Activated B cell treated with CpG ODN at 0.5 μM for 24 hours (primary cell): ENCODE measurements at regions of chr9 and their contacts with region 1.

Region 1: DNA sequence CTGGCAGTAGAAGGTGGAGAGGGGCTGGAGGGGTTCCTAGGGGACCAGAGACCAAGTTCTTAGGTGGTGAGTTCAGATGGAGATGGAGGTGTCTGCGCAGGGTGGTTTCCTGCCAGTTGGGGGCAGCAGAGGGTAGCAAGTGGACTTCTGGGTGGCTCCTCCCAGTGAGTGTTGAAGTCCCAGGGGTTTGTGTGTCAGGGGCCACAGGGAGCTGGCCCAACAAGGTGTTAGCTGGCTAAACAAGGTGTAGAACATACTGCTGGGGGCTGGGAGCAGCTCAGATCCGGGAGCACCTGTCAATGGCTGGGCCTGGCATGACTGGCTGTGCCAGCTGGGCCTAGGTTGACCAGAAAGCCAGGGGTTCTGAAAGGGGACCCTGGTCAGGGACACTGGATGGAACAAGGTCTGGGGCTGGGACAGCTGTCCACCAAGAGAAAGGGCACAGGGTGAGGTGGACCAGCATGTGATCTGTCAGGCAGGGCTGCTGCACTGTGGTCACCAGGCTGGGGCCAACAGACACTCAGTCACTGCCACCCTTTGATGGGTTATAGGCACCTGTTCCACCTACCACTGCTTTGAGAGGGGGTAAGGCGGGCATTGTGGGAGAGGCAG is 35.6 kb downstream of the DAB2IP start:
- DNase-seq: peak; percentile 57
- ATAC-seq: peak; percentile 90
- H3K4me3 Mint-ChIP-seq: no peak overlapping the region
- H3K27ac Mint-ChIP-seq: no peak overlapping the region
- H3K4me1 Mint-ChIP-seq: no peaks in the 10 kb centered on the region
- H3K27me3 Mint-ChIP-seq: peaks cover 14% of the 10 kb centered on the region
- CTCF ChIP-seq: no peak

Region 2: DNA sequence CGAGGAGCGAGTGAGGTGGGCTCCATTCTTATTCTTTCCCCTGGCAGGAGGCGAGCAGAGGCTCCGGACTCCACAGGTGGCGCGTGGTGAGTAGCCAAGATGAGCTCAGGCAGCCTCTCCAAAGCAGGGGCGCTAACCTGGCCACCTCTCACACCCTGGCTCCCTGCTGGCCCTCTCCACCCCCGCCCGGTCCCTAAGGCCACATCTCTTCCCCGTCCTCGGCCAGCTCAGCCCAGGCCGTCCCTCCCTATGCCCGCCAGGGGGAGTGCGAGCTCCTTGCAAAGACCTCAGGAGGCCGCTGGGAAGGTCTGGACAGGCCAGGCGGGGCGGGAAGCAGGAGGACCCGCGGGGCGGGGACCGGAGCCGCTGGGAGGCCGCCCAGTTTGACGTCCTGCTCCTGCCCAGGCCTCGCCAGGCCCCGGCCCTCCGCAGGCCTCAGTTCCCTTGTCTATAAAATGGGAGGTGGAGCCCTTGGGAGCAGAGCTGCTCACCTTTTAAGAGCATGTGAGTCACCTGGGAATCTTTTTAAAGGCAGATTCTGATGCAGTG is 141.1 kb before region 1 on chr9:
- CTCF ChIA-PET with region 1: interaction called, 8 read pairs
- POLR2A ChIA-PET with region 1: no interaction called
- intact Hi-C with region 1: loop called (anchors 5 kb)
- DNase-seq: peak; percentile 68
- ATAC-seq: peak; percentile 86
- H3K4me3 Mint-ChIP-seq: no peak overlapping the region
- H3K27ac Mint-ChIP-seq: no peak overlapping the region
- H3K4me1 Mint-ChIP-seq: no peaks in the 10 kb centered on the region
- H3K27me3 Mint-ChIP-seq: peaks cover 24% of the 10 kb centered on the region
- CTCF ChIP-seq: no peak